CD14-positive monocyte (primary cell): ENCODE measurements at regions of chr6 and their contacts with region 1.

Region 1: DNA sequence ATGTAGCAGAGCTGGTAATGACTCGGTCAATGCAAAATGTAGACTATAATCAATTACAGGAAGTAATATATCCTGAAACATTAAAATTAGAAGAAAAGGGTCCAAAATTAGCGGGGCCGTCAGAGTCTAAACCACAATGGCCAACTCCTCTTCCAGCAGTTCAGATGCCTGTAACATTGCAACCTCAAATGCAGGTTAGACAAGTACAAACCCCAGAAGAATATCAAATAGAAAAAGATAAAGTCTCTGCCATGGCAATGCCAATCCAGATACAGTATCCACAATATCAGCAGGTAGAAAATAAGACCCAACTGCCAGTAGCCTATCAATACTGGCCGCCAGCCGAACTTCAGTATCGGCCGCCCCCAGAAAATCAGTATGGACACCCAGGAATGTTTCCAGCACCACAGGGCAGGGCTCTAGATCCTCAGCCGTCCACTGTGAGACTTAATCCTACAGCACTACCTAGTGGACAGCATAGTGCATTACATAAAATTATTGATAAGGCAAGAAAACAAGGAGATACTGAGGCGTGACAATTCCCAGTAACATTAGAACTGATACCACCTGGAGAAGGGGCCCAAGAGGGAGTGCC is 158.4 kb downstream of the GPX5 start:
- DNase-seq: peak in 2 of 3 donors; percentile 4 to 10
- H3K4me3 ChIP-seq: no peak overlapping the region
- H3K4me3 Mint-ChIP-seq: no peak overlapping the region
- H3K27ac ChIP-seq: no peak overlapping the region
- H3K27ac Mint-ChIP-seq: no peak overlapping the region
- H3K4me1 ChIP-seq: no peaks in the 10 kb centered on the region
- H3K4me1 Mint-ChIP-seq: peaks cover 2% of the 10 kb centered on the region
- H3K27me3 ChIP-seq: peaks cover 50 to 53% of the 10 kb centered on the region in 2 donors
- H3K27me3 Mint-ChIP-seq: peaks cover 48 to 67% (median 57%) of the 10 kb centered on the region in 3 donors
- CTCF ChIP-seq: peak; percentile 60

Region 2: DNA sequence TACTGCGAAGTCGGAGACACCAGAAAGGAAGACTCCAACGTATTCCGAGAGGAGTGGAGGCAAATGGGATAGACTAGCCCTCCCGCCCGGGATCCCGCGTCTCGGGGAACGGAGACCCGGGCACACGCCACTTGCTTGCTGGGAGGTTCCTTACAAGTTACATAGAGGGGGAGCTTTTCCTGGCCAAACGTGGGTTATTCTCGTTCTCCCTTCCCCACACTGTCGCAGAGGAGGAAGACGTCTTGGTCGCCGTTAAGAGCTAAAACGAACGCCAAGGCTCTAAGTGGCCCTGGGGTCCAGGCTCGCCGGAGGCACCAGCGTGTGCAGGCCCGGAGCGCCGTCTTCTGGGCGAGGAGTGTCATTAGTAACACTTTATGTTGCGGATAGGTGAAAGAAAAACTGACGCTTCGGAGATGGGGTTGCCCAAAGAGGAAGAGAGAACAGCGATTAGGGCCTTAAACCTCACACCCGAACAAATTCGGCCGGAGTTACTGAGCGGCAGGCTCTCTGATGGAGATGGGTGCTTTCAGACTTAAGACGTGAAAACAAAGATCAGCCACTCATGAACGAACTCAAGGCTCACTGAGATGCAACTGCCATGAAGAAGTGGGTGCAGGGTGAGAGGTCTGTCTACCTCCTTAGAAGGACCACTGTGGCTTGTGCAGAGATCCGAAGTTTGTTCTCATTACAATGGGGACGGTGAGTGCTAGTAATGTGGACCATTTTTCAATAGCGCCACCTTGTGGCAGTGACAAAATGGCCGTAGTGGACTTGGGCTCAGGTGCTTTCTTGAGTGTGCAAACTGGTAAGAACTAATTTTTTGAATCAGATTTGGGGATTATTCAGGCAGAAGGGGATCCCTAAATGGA is 332.8 kb after region 1 on chr6:
- intact Hi-C with region 1: loop called (anchors 5 kb)
- DNase-seq: peak; percentile 60 to 75 (median 71)
- H3K4me3 ChIP-seq: peak overlapping the region; percentile 19 to 81 (median 76)
- H3K4me3 Mint-ChIP-seq: peak overlapping the region; percentile 85 to 96
- H3K27ac ChIP-seq: no peak overlapping the region
- H3K27ac Mint-ChIP-seq: peak overlapping the region in 4 of 7 donors; percentile 45 to 81 (median 73)
- H3K4me1 ChIP-seq: peaks cover 11 to 15% of the 10 kb centered on the region in 2 donors
- H3K4me1 Mint-ChIP-seq: peaks cover 14% of the 10 kb centered on the region
- H3K27me3 ChIP-seq: peaks cover 32 to 57% of the 10 kb centered on the region in 2 donors
- H3K27me3 Mint-ChIP-seq: peaks cover 35 to 61% (median 45%) of the 10 kb centered on the region in 3 donors
- CTCF ChIP-seq: peak; percentile 91

Region 3: DNA sequence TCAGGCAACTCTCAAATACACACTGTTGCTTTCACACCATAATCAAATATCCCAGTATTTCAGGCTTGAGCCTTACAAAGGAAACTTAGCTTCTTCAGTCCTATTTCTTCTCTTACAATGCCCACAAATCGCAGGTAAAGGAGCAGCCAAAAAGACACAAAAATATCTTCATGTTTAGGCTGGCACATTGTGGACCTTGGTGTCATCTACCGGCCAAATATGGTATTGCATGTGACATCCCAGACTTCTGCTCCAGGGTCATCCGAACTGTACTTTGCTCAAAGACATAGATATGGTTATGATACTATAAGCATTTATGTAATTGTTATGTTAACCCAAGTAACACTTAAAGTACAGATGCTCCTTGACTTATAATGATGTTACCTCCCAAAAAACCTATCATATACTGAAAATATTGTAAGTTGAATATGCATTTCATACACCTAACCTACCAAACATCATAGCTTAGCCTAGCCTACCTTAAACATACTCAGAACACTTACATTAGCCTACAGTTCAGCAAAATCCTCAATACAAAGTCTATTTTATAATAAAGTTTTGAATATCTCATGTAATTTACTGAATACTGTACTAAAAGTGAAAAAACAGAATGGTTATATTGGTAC is 905.5 kb after region 1 on chr6:
- intact Hi-C with region 1: loop called (anchors 5 kb)
- DNase-seq: peak; percentile 15 to 37 (median 36)
- H3K4me3 ChIP-seq: no peak overlapping the region
- H3K4me3 Mint-ChIP-seq: no peak overlapping the region
- H3K27ac ChIP-seq: no peak overlapping the region
- H3K27ac Mint-ChIP-seq: no peak overlapping the region
- H3K4me1 ChIP-seq: no peaks in the 10 kb centered on the region
- H3K4me1 Mint-ChIP-seq: no peaks in the 10 kb centered on the region
- H3K27me3 ChIP-seq: peaks cover 0 to 5% of the 10 kb centered on the region in 2 donors
- H3K27me3 Mint-ChIP-seq: peaks cover 7 to 20% (median 8%) of the 10 kb centered on the region in 3 donors
- CTCF ChIP-seq: peak; percentile 97